Right ventricle myocardium superior (tissue), 1 donor: ENCODE measurements at regions of chr7 and their contacts with region 1.

Region 1: GRCh38 chr7:141014524-141015395 is at the start of gene MRPS33:
- DNase-seq: peak; percentile 96
- ATAC-seq: peak; percentile 100
- total RNA-seq, gene MRPS33: 136 TPM

Region 2: DNA sequence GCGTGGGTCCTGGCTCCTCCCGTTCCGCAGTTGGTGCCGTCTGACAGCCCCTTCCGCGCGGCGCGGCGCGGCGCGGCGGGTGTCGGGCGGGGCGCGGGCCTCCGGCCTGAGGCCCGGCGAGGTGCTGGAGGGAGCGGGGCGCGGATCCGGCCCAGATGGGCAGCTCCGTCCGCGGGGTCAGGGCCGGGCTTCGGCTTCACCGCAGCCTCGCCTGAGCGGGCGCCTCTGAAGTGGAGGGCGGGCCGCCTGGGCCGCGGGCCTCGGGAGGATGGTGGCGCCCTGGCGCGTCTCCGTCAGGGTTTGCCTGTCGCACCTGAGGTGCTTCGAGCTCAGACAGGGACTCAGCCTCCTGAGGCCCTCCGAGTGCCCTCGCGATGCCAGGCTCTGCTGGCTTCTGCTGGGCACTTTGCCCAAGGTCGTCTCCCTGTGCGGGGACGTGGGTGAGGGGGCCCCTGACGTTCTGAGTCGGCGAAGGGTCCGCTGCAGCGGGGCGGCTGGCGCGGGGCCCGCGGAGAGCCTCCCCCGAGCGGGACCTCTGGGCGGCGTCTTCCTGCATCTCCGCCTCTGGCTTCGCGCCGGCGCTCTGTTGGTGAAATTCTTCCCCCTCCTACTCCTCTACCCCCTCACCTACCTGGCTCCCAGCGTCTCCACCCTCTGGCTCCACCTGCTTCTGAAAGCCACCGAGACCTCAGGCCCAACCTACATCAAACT is 341.5 kb before region 1 on chr7:
- intact Hi-C with region 1: loop called (anchors 10 kb)
- DNase-seq: peak; percentile 65
- ATAC-seq: peak; percentile 70

Region 3: GRCh38 chr7:140745266-140746058 is 269.3 kb before region 1 on chr7:
- intact Hi-C with region 1: no loop called
- DNase-seq: no peak
- ATAC-seq: no peak

Region 4: GRCh38 chr7:140810830-140811556 is 203.8 kb before region 1 on chr7:
- intact Hi-C with region 1: loop called (anchors 5 kb)
- DNase-seq: no peak
- ATAC-seq: peak; percentile 96

Region 5: GRCh38 chr7:140841166-140841715 is 173.5 kb before region 1 on chr7:
- intact Hi-C with region 1: no loop called
- DNase-seq: no peak
- ATAC-seq: no peak

Region 6: GRCh38 chr7:141533149-141533949 is 518.6 kb after region 1 on chr7:
- intact Hi-C with region 1: loop called (anchors 10 kb)
- DNase-seq: peak; percentile 70
- ATAC-seq: peak; percentile 89